ENCODE measurements at regions of chrX and their contacts with region 1.

Region 1: DNA sequence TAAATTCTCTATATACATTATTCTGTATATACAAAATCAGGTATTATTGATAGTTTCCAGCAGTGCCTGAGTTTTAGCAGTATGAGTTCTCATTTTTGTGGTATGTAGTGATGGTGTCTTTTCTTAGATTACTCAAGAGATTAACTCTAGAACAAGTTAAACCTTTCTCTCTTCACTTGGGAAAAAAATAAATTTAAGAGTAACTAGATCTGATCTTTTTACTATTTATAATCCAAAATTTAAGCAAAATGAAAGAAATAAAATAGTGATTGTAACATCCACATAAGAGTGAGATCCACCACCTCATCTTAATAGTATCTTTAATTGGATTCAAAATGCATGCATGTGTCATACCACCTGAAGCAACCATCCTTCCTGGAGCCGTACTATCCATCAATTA is 124.1 kb upstream of the DDX3X start:
- DNase-seq: no peak
- H3K4me3 ChIP-seq: no peak overlapping the region
- H3K27ac ChIP-seq: no peak overlapping the region
- H3K4me1 ChIP-seq: no peaks in the 10 kb centered on the region
- H3K27me3 ChIP-seq: no peaks in the 10 kb centered on the region
- CTCF ChIP-seq: no peak

Region 2: GRCh38 chrX:41164449-41164848 is 45.4 kb before region 1 on chrX:
- intact Hi-C with region 1: loop called (anchors 10 kb)
- DNase-seq: no peak
- H3K4me3 ChIP-seq: no peak overlapping the region
- H3K27ac ChIP-seq: no peak overlapping the region
- H3K4me1 ChIP-seq: no peaks in the 10 kb centered on the region
- H3K27me3 ChIP-seq: no peaks in the 10 kb centered on the region
- CTCF ChIP-seq: no peak

Region 3: GRCh38 chrX:42415636-42416035 is 1205.8 kb after region 1 on chrX:
- intact Hi-C with region 1: no loop called
- DNase-seq: no peak
- H3K4me3 ChIP-seq: no peak overlapping the region
- H3K27ac ChIP-seq: no peak overlapping the region
- H3K4me1 ChIP-seq: no peaks in the 10 kb centered on the region
- H3K27me3 ChIP-seq: no peaks in the 10 kb centered on the region
- CTCF ChIP-seq: no peak